Uterus (tissue), 4 donors: ENCODE measurements at regions of chr2 and their contacts with region 1.

Region 1: DNA sequence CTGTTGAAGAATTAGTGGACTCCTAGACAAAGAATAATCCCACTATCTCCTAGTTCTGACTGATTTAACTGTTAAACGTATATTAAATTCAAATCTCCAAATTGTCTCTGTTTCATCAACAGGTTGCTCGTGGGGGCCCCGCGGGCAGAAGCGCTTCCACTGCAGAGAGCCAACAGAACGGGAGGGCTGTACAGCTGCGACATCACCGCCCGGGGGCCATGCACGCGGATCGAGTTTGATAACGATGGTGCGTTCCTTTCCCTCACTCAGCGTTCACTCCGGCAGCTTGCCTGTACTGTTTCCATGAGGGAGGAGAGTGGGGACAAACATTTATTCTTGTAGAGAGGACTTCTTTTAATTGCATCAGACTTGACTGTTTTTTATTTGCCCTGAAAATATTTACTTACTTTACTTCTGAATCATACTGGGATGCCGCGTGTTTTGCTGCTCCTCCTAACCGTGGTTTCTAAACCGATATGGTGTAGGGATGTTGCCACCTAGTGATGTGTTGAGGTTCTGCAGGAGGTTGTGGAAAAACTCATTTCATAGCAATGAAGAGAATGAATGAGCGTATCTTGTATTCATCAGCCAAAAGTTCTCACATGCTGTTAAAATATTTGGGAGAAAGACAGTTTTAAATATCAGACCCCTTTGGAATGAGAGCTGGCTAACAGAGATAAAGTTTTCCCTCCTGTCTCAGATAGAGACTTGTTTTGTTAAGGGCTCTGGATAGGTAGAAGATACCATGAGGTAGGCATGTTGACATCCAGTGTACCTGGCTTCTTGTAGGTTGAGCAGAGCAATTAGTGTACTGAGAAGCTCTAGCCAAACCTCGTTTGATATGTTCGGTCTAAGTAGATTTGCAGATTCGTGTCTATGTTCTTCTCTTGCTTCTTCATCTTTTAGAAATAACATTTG is 38.3 kb downstream of the ITGA6 start:
- DNase-seq: peak; percentile 63 to 84
- H3K4me3 ChIP-seq: peak overlapping the region in 1 of 2 donors; percentile 16
- H3K27ac ChIP-seq: peak overlapping the region; percentile 66 to 67
- H3K4me1 ChIP-seq: peaks cover 0 to 4% of the 10 kb centered on the region in 2 donors
- H3K27me3 ChIP-seq: no peaks in the 10 kb centered on the region
- CTCF ChIP-seq: peak; percentile 83 to 90 (median 86)
- POLR2A ChIP-seq: no peak

Region 2: GRCh38 chr2:172172513-172173173 is 293.0 kb before region 1 on chr2:
- intact Hi-C with region 1: loop called (anchors 5 kb)
- DNase-seq: peak; percentile 61 to 67
- H3K4me3 ChIP-seq: peak overlapping the region; percentile 37 to 51
- H3K27ac ChIP-seq: peak overlapping the region; percentile 68 to 78
- H3K4me1 ChIP-seq: no peaks in the 10 kb centered on the region
- H3K27me3 ChIP-seq: no peaks in the 10 kb centered on the region
- CTCF ChIP-seq: peak; percentile 81 to 95 (median 88)
- POLR2A ChIP-seq: peak in 1 of 2 donors; percentile 27